PC-3 (cell line): ENCODE measurements at regions of chr9 and their contacts with region 1.

Region 1: DNA sequence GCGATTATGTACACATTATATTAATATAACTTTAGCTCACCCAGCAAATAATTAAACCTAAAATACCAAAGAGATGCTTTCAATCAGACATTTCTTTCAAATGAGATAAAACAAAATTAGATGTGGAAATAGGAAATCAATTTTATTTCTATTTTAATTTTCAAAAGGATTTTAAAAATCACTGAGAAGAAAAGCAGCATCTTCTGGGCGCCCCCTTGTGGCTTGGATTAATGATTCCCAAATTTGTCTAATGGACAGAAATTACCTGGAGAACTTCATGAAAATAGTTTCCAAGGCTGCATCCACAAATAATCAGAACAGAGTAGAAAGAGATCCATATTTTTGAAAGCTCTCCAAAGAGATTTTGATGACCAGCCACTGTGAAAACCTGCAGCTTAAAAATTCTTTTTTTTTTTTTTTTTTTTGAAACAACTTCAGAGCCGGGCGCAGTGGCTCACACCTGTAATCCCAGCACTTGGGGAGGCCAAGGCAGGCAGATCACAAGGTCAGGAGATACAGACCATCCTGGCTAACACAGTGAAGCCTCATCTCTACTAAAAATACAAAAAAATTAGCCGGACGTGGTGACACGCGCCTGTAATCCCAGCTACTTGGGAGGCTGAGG is 50.9 kb upstream of the CEMIP2 start:
- DNase-seq: peak; percentile 51
- ATAC-seq: no peak
- H3K4me3 ChIP-seq: no peak overlapping the region
- H3K27ac ChIP-seq: no peak overlapping the region
- H3K4me1 ChIP-seq: peaks cover 8% of the 10 kb centered on the region
- H3K27me3 ChIP-seq: no peaks in the 10 kb centered on the region
- CTCF ChIP-seq: peak; percentile 75

Region 2: DNA sequence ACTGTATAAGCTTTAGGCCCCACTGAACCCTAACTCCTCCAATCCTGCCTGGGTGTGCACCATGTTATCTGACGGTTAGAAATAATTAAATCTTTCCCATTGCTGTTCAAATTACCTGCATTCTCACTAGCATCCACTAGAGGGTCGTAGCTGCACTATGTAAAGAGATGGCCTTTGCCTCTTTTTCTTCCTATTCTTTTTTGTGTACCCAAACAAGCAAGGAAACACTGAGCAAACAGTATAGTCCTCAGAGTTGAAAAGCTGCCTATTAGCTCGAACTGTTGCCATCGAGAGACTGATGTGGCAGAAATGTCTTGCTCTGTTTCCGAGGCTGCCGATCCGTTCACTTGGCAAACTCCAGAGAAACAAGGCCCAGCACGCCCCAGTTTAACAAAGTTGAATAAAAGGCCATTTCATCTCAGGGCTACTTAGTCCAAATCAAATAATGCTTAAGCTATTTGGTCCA is 534.0 kb before region 1 on chr9:
- CTCF ChIA-PET with region 1: no interaction called
- POLR2A ChIA-PET with region 1: no interaction called
- intact Hi-C with region 1: loop called (anchors 1 kb)
- DNase-seq: peak; percentile 72
- ATAC-seq: peak; percentile 71
- H3K4me3 ChIP-seq: no peak overlapping the region
- H3K27ac ChIP-seq: no peak overlapping the region
- H3K4me1 ChIP-seq: no peaks in the 10 kb centered on the region
- H3K27me3 ChIP-seq: no peaks in the 10 kb centered on the region
- CTCF ChIP-seq: peak; percentile 82